Calu3 (cell line): ENCODE measurements at regions of chr6 and their contacts with region 1.

Region 1: GRCh38 chr6:142756215-142756634 is 188.8 kb downstream of the HIVEP2 start:
- DNase-seq: peak; percentile 58
- H3K4me3 Mint-ChIP-seq: no peak overlapping the region
- H3K27ac Mint-ChIP-seq: peak overlapping the region; percentile 73
- H3K4me1 Mint-ChIP-seq: peaks cover 22% of the 10 kb centered on the region
- H3K27me3 Mint-ChIP-seq: no peaks in the 10 kb centered on the region
- CTCF ChIP-seq: no peak

Region 2: GRCh38 chr6:142485256-142485655 is 271.0 kb before region 1 on chr6:
- CTCF ChIA-PET with region 1: no interaction called
- intact Hi-C with region 1: no loop called
- DNase-seq: no peak
- H3K4me3 Mint-ChIP-seq: no peak overlapping the region
- H3K27ac Mint-ChIP-seq: no peak overlapping the region
- H3K4me1 Mint-ChIP-seq: no peaks in the 10 kb centered on the region
- H3K27me3 Mint-ChIP-seq: peaks cover 12% of the 10 kb centered on the region
- CTCF ChIP-seq: no peak

Region 3: GRCh38 chr6:142926494-142927270 is 170.5 kb after region 1 on chr6:
- CTCF ChIA-PET with region 1: no interaction called
- intact Hi-C with region 1: loop called (anchors 10 kb)
- DNase-seq: peak; percentile 66
- H3K4me3 Mint-ChIP-seq: peak overlapping the region; percentile 57
- H3K27ac Mint-ChIP-seq: peak overlapping the region; percentile 79
- H3K4me1 Mint-ChIP-seq: peaks cover 11% of the 10 kb centered on the region
- H3K27me3 Mint-ChIP-seq: no peaks in the 10 kb centered on the region
- CTCF ChIP-seq: no peak